Naive thymus-derived CD4-positive, alpha-beta T cell (primary cell): ENCODE measurements at regions of chr9 and their contacts with region 1.

Region 1: GRCh38 chr9:136245219-136246150 is at the start of gene QSOX2:
- DNase-seq: peak; percentile 76 to 89 (median 82)
- ATAC-seq: peak; percentile 94
- H3K4me3 ChIP-seq: peak within 1 kb of the TSS; percentile 65
- H3K4me3 Mint-ChIP-seq: peak within 1 kb of the TSS; percentile 89 to 100 (median 94)
- H3K27ac ChIP-seq: peak within 1 kb of the TSS; percentile 65
- H3K27ac Mint-ChIP-seq: peak within 1 kb of the TSS; percentile 83 to 93 (median 88)
- H3K4me1 ChIP-seq: peaks cover 22 to 29% of the 10 kb centered on the region in 2 donors
- H3K4me1 Mint-ChIP-seq: peaks cover 25 to 45% (median 36%) of the 10 kb centered on the region in 7 donors
- H3K27me3 ChIP-seq: no peaks in the 10 kb centered on the region
- H3K27me3 Mint-ChIP-seq: peaks cover 0 to 2% (median 0%) of the 10 kb centered on the region in 5 donors
- total RNA-seq, gene QSOX2: 11.5 to 15.9 (median 12.0) TPM

Region 2: GRCh38 chr9:135961277-135961705 is 284.2 kb before region 1 on chr9 and contains the start of gene UBAC1:
- CTCF ChIA-PET with region 1: no interaction called
- POLR2A ChIA-PET with region 1: interaction called, 4 read pairs
- intact Hi-C with region 1: loop called (anchors 1 to 10 kb)
- DNase-seq: peak; percentile 91 to 96 (median 94)
- ATAC-seq: peak; percentile 97
- H3K4me3 ChIP-seq: peak within 1 kb of the TSS; percentile 65
- H3K4me3 Mint-ChIP-seq: peak within 1 kb of the TSS; percentile 78 to 93 (median 88)
- H3K27ac ChIP-seq: peak within 1 kb of the TSS; percentile 82
- H3K27ac Mint-ChIP-seq: peak within 1 kb of the TSS; percentile 74 to 94 (median 83)
- H3K4me1 ChIP-seq: peaks cover 15 to 16% of the 10 kb centered on the region in 2 donors
- H3K4me1 Mint-ChIP-seq: peaks cover 20 to 39% (median 30%) of the 10 kb centered on the region in 7 donors
- H3K27me3 ChIP-seq: no peaks in the 10 kb centered on the region
- H3K27me3 Mint-ChIP-seq: peaks cover 0 to 15% (median 0%) of the 10 kb centered on the region in 5 donors
- total RNA-seq, gene UBAC1: 28.6 to 36.1 (median 32.2) TPM

Region 3: GRCh38 chr9:136109351-136110081 is 136.0 kb before region 1 on chr9:
- CTCF ChIA-PET with region 1: no interaction called
- POLR2A ChIA-PET with region 1: no interaction called
- intact Hi-C with region 1: loop called (anchors 2 to 5 kb)
- DNase-seq: peak; percentile 80 to 93 (median 89)
- ATAC-seq: peak; percentile 96
- H3K4me3 ChIP-seq: peak overlapping the region; percentile 69
- H3K4me3 Mint-ChIP-seq: peak overlapping the region; percentile 78 to 91 (median 88)
- H3K27ac ChIP-seq: peak overlapping the region; percentile 82
- H3K27ac Mint-ChIP-seq: peak overlapping the region; percentile 64 to 93 (median 91)
- H3K4me1 ChIP-seq: peaks cover 60 to 75% of the 10 kb centered on the region in 2 donors
- H3K4me1 Mint-ChIP-seq: peaks cover 42 to 82% (median 64%) of the 10 kb centered on the region in 7 donors
- H3K27me3 ChIP-seq: no peaks in the 10 kb centered on the region
- H3K27me3 Mint-ChIP-seq: no peaks in the 10 kb centered on the region

Region 4: DNA sequence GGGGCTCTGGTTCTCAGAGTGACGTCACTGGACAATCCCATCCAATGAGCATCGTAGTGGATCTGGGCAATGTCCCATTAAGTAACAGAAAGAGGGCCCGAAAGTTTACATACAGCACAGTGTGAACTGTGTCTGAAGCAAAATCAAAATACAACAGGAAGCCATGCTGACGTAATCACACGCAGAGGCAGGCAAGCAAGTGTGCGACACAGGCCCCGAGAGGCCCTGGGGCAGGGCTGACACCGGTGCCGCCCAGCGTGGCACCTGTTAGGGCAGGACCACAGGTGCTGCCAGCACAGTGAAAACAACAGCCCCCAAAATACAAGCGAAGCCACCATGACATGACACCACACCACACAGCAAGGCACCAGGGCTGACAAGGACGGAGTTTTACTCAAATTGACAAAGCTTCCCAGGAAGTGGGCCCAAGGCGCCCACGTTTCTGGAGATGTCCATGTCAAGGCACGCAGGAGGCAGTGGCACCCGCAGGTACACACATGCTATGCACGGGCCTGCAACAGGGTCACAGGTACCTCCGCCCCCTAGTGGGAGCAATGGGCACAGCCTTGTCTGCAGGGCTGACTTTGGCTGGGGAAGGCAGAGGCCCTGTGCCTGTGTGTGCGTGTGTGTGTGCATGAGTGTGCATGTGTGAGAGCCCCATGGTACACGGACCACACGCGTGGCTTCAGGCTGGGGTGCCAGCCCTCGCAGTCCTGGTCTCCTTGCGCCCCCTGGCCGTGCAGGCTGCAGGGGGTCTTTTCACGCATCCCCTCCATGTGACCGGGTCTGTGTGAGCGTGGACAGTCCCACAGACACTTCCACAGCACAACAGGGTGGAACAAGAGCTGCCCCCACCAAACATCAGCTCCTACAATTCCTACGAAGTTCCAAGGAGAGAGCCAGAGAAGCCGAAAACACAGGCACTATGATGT is 19.5 kb before region 1 on chr9:
- CTCF ChIA-PET with region 1: no interaction called
- POLR2A ChIA-PET with region 1: no interaction called
- intact Hi-C with region 1: loop called (anchors 2 kb)
- DNase-seq: peak in 8 of 9 donors; percentile 40 to 60 (median 53)
- ATAC-seq: peak; percentile 85
- H3K4me3 ChIP-seq: no peak overlapping the region
- H3K4me3 Mint-ChIP-seq: no peak overlapping the region
- H3K27ac ChIP-seq: no peak overlapping the region
- H3K27ac Mint-ChIP-seq: peak overlapping the region in 1 of 9 donors; percentile 59
- H3K4me1 ChIP-seq: no peaks in the 10 kb centered on the region
- H3K4me1 Mint-ChIP-seq: peaks cover 5 to 30% (median 19%) of the 10 kb centered on the region in 7 donors
- H3K27me3 ChIP-seq: no peaks in the 10 kb centered on the region
- H3K27me3 Mint-ChIP-seq: no peaks in the 10 kb centered on the region

Region 5: DNA sequence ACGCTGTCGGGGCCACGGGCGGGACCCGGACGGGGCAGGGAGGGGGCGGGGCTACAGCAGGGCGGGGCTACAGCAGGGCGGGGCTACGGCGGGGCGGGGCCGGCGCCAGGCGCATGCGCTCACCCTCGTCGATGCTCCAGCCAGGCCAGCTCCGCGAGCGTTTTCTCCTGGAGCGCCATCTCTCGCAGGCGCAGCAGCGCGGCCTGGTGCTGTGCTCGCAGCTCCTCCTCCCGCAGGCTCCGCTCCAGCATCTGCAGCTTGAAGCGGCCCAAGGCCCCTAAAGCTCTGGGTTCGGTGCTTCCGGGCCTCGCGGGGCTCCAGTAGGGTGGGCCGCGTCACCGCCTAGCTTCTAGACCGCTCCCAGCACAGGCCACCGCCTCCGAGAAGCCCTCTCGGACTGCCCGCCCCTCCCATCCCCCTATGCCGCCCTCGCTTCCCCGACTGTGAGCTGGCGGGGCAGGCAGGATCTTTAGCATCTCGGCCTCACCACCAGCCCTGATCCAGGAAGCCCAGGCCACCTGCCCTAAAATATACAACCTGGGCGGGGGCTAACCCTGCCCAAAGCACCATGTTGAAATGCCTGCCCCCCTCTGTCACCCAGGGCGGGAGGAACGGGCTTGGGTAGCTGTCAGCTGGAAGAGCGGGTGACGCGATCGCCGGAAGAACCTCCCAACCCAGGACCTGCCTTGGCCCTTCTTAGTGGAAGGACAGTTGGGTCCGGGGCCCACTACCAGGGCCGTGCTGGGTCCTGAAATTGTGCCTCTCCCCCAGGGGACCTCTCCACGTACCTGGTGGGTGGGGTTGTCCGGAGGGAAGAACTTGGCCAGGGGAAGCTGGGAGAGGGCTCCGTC is 22.0 kb after region 1 on chr9:
- CTCF ChIA-PET with region 1: no interaction called
- POLR2A ChIA-PET with region 1: interaction called, 6 read pairs
- intact Hi-C with region 1: loop called (anchors 1 kb)
- DNase-seq: peak; percentile 70 to 85 (median 80)
- ATAC-seq: peak; percentile 99
- H3K4me3 ChIP-seq: peak overlapping the region; percentile 74
- H3K4me3 Mint-ChIP-seq: peak overlapping the region; percentile 70 to 84 (median 79)
- H3K27ac ChIP-seq: peak overlapping the region; percentile 62
- H3K27ac Mint-ChIP-seq: peak overlapping the region; percentile 57 to 89 (median 77)
- H3K4me1 ChIP-seq: peaks cover 4 to 7% of the 10 kb centered on the region in 2 donors
- H3K4me1 Mint-ChIP-seq: peaks cover 0 to 14% (median 3%) of the 10 kb centered on the region in 7 donors
- H3K27me3 ChIP-seq: no peaks in the 10 kb centered on the region
- H3K27me3 Mint-ChIP-seq: peaks cover 0 to 14% (median 0%) of the 10 kb centered on the region in 5 donors

Region 6: DNA sequence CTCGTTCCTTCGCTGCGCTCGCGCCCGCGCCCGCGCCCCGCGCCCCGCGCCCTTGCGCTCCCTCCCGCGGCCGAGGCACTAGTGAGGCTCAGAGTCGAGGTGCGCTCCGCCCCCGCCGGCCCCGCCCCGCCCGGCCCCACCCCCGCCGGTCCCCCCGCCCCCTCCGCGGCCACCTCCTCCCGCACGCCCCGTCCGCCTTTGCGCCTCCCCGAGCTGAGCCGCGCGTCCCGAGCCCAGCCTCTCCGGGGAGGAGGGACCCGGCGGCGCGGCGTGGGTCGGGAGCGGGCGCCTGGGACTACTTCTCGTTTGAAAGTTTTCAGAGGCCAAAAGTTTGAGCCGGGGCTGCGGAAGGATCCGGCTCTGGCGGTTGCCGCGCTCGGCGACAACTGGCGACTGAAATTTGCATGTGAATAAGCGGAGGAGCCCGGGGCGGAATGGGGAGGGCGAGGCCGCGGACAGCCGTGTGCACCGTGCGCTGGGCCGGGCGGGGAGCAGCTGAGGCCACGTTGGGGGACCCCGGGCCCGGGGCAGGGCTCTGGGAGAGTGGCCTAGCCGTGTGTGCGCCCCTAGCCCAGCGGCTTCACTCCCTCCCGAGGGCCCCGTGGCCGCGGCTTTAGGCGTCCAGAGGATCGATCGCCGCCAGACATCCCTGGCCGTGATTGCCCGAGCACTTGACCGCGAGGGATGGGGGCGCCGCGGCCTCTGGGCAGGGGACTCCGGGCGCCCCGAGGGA is 300.6 kb after region 1 on chr9 and contains the start of gene NOTCH1:
- CTCF ChIA-PET with region 1: no interaction called
- POLR2A ChIA-PET with region 1: no interaction called
- intact Hi-C with region 1: loop called in 1 of 2 experiments (anchors 10 kb)
- DNase-seq: peak; percentile 77 to 91 (median 86)
- ATAC-seq: peak; percentile 89
- H3K4me3 ChIP-seq: peak within 1 kb of the TSS; percentile 81
- H3K4me3 Mint-ChIP-seq: peak within 1 kb of the TSS; percentile 78 to 95 (median 88)
- H3K27ac ChIP-seq: peak within 1 kb of the TSS; percentile 80
- H3K27ac Mint-ChIP-seq: peak within 1 kb of the TSS; percentile 57 to 90 (median 81)
- H3K4me1 ChIP-seq: peaks cover 20 to 32% of the 10 kb centered on the region in 2 donors
- H3K4me1 Mint-ChIP-seq: peaks cover under 1 to 43% (median 28%) of the 10 kb centered on the region in 7 donors
- H3K27me3 ChIP-seq: no peaks in the 10 kb centered on the region
- H3K27me3 Mint-ChIP-seq: no peaks in the 10 kb centered on the region
- total RNA-seq, gene NOTCH1: 49.7 to 92.9 (median 58.0) TPM